ENCODE measurements at regions of chr2 and their contacts with region 1.

Region 1: GRCh38 chr2:203238704-203239526 is at the start of gene CYP20A1:
- DNase-seq: peak; percentile 87 to 96 (median 93)
- H3K4me3 ChIP-seq: peak within 1 kb of the TSS; percentile 63 to 98 (median 88)
- H3K27ac ChIP-seq: peak within 1 kb of the TSS; percentile 55 to 99 (median 97)
- H3K27me3 ChIP-seq: no peaks in the 10 kb centered on the region
- CTCF ChIP-seq: peak in 54 of 56 donors; percentile 21 to 75 (median 58)
- total RNA-seq, gene CYP20A1: 5.5 to 22.0 (median 12.8) TPM

Region 2: GRCh38 chr2:202265467-202266277 is 973.2 kb before region 1 on chr2 and contains the start of gene NOP58:
- intact Hi-C with region 1: loop called in 1 of 2 experiments (anchors 10 kb)
- DNase-seq: peak; percentile 76 to 94 (median 93)
- H3K4me3 ChIP-seq: peak within 1 kb of the TSS; percentile 67 to 100 (median 93)
- H3K27ac ChIP-seq: peak within 1 kb of the TSS; percentile 86 to 100 (median 98)
- H3K27me3 ChIP-seq: no peaks in the 10 kb centered on the region
- CTCF ChIP-seq: peak in 23 of 56 donors; percentile 4 to 47 (median 20)
- total RNA-seq, gene NOP58: 25.6 to 69.7 (median 45.3) TPM

Region 3: GRCh38 chr2:202375609-202376408 is 863.1 kb before region 1 on chr2 and contains the start of gene BMPR2:
- intact Hi-C with region 1: loop called in 1 of 2 experiments (anchors 10 kb)
- DNase-seq: peak; percentile 70 to 93 (median 83)
- H3K4me3 ChIP-seq: peak within 1 kb of the TSS; percentile 67 to 98 (median 89)
- H3K27ac ChIP-seq: peak within 1 kb of the TSS; percentile 36 to 98 (median 94)
- H3K27me3 ChIP-seq: no peaks in the 10 kb centered on the region
- CTCF ChIP-seq: peak in 12 of 56 donors; percentile 4 to 35 (median 16)
- total RNA-seq, gene BMPR2: 42.7 to 140 (median 102) TPM

Region 4: DNA sequence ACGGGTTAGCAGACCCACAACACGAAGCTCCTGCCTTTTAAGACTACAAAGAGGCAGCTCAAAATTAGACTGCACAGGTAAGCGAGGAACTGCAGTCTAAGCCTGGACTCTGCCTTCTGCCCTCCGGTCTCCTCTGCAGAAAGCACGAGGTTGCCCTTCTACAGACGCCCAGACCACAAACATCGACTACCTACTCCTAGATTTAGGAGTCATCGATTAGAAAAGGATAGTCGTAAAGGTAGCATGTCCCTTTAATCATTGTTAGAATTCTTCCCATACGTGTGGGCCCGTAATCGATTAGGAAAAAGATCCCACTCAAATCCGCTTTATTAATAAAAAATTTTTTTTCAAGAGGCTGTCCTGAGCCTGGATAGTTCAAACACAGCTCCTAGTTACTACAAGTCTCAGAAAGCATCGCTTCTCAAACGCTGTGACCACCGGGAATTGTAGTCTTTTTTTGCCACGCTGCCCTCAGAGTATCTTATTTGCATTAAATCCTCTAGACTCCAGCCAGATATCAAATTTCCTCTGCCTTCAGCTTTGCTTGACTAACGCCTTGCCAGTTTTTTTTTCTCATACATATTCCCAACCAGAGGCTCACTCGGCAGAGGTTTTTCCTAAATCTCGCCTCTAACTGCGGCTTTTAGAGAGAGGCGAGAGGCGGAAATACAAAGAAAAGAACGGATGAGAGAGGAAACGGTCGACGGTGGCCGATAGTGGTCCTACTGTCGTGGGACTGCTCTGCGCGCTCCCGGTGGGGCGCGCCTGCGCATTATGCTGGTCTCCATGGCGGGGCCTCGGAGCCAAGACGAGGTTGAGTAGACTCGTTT is 327.2 kb before region 1 on chr2 and contains the starts of genes CARF and WDR12:
- intact Hi-C with region 1: loop called (anchors 5 to 10 kb)
- DNase-seq: peak; percentile 89 to 94 (median 92)
- H3K4me3 ChIP-seq: peak within 1 kb of the TSS; percentile 62 to 99 (median 83)
- H3K27ac ChIP-seq: peak within 1 kb of the TSS; percentile 70 to 99 (median 94)
- H3K27me3 ChIP-seq: no peaks in the 10 kb centered on the region
- CTCF ChIP-seq: peak in 11 of 56 donors; percentile 6 to 32 (median 17)
- total RNA-seq, gene CARF: 12.4 to 36.7 (median 25.8) TPM
- total RNA-seq, gene WDR12: 14.0 to 55.6 (median 34.3) TPM

Region 5: DNA sequence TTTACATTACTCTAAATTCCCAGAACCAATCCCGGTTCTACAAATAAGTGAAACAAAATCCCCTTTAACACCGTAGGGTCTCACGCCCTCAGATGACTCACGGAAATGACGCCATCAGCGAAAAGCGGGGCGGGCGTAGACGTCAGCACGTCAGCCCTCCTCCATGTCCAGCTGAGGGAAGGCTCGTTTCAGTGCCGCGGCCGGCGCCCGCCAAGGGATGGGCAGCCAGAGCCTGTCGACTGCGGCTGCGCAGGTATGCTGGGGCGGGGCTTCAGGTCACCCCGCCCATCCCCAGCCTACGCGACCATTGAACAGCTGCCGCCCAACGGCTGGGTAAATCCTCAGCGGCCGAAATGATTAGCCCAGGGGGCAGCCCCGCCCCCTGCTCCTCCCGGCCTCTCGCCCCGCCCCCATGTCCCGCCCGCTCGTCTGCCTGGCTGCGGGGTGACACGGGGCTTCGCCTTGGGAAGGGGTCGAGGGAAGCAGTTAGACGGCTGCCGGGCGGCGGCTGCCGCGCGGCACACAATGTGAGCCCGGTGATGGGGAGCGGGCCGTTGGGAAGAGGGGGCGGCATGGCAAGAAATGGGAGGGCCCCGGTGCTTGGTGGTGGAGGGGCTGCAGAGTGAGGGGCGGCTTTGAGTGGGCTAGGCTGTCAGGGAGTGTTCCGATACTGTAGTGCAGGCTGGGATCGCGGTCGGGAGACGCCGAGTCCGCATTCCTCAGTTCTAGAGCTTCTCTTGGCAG is 224.3 kb before region 1 on chr2 and contains the start of gene NBEAL1:
- intact Hi-C with region 1: loop called (anchors 5 kb)
- DNase-seq: peak; percentile 97 to 99 (median 98)
- H3K4me3 ChIP-seq: peak within 1 kb of the TSS; percentile 39 to 99 (median 84)
- H3K27ac ChIP-seq: peak within 1 kb of the TSS; percentile 59 to 97 (median 92)
- H3K27me3 ChIP-seq: no peaks in the 10 kb centered on the region
- CTCF ChIP-seq: peak in 25 of 56 donors; percentile 4 to 57 (median 23)
- total RNA-seq, gene NBEAL1: 14.1 to 45.8 (median 27.0) TPM

Region 6: GRCh38 chr2:203327901-203328759 is 89.2 kb after region 1 on chr2 and contains the start of gene ABI2:
- intact Hi-C with region 1: loop called (anchors 1 kb)
- DNase-seq: peak; percentile 70 to 93 (median 84)
- H3K4me3 ChIP-seq: peak within 1 kb of the TSS; percentile 60 to 99 (median 93)
- H3K27ac ChIP-seq: peak within 1 kb of the TSS; percentile 54 to 98 (median 94)
- H3K27me3 ChIP-seq: no peaks in the 10 kb centered on the region
- CTCF ChIP-seq: peak in 13 of 56 donors; percentile 5 to 36 (median 14)
- total RNA-seq, gene ABI2: 128 to 305 (median 224) TPM

Region 7: GRCh38 chr2:203446071-203446481 is 207.2 kb after region 1 on chr2:
- intact Hi-C with region 1: loop called in 1 of 2 experiments (anchors 10 kb)
- DNase-seq: no peak
- H3K4me3 ChIP-seq: no peak overlapping the region
- H3K27ac ChIP-seq: peak overlapping the region in 1 of 59 donors; percentile 4
- H3K27me3 ChIP-seq: no peaks in the 10 kb centered on the region
- CTCF ChIP-seq: no peak